Esophagus muscularis mucosa (tissue), 4 donors: ENCODE measurements at regions of chr2 and their contacts with region 1.

Region 1: GRCh38 chr2:181104512-181105115 is 124.2 kb downstream of the UBE2E3 start:
- DNase-seq: no peak
- H3K4me3 ChIP-seq: no peak overlapping the region
- H3K27ac ChIP-seq: no peak overlapping the region
- H3K4me1 ChIP-seq: peaks cover 0 to 5% (median 0%) of the 10 kb centered on the region in 4 donors
- H3K27me3 ChIP-seq: no peaks in the 10 kb centered on the region
- CTCF ChIP-seq: peak; percentile 36 to 62 (median 42)
- EP300 ChIP-seq: no peak
- POLR2A ChIP-seq: no peak

Region 2: DNA sequence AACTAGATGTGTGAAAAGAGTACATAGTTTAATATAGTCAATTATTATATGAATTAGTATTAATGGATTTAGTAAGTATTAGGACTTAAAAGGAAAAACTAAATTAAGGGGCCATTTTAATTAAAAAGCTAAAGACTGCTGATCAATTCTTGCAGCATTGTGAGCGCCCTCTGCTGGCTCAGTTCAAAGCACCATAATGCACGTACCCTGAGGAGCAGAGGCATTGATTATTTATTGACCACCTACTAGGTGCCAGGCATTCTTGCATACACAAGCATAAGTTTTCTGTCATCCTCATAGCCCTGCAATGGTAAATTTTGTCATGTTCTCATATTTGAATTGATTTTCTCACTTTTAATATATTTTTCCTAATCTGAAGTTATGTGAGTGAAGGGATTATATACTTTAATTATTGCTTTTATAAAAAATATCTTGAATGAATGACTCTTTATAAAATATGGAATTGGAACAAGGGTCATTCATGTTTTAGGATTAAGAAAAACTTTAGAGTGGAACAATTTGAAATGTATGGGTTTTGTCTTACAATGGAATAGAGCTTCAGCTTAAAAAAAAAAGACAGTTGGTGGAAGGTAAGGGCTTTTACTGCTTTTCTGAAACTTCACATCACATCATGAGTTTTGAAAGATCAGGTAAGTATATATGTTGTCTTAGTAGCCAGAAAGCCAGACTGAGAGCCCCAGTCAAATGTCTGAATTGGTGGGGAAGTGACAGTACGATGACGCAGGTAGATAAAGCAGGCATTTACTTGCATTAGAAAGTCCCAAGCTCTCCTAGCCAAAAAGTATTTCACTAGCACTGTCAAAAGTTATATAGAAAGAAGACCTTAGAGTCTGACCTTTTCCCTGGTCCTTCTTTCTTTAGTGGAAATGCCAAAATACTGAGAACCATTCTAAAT is 362.3 kb after region 1 on chr2:
- intact Hi-C with region 1: loop called (anchors 5 kb)
- DNase-seq: no peak
- H3K4me3 ChIP-seq: no peak overlapping the region
- H3K27ac ChIP-seq: no peak overlapping the region
- H3K4me1 ChIP-seq: no peaks in the 10 kb centered on the region
- H3K27me3 ChIP-seq: no peaks in the 10 kb centered on the region
- CTCF ChIP-seq: peak; percentile 53 to 77 (median 69)
- EP300 ChIP-seq: no peak
- POLR2A ChIP-seq: no peak

Region 3: DNA sequence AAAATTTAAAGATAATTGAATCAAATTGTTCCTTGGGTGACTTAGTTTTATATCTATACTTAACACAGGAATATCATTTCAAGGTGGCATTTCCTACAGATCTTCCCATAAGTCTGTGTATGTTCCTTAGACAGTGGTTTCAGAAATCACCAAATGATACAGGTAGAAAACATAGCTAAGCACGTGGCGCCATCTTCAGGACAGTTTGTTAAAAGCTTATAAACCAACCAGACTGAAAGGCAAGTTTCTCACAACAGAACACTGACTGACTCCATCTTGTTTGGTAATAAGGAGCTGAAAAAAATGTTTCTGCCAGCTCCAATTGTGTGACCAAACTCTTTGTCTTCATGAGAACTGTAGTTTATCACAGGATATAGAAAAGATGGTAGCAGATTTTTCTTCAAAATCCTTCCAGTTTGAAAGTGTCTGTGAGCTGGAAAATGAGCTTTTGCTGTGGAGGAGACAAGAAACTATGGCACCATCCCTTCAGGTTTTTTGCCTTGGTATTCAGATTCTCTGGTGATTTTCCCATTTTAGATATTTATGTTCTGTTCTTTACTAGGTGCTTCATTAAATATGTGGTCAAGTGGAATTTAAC is 610.5 kb after region 1 on chr2:
- intact Hi-C with region 1: loop called (anchors 10 kb)
- DNase-seq: no peak
- H3K4me3 ChIP-seq: no peak overlapping the region
- H3K27ac ChIP-seq: no peak overlapping the region
- H3K4me1 ChIP-seq: no peaks in the 10 kb centered on the region
- H3K27me3 ChIP-seq: no peaks in the 10 kb centered on the region
- CTCF ChIP-seq: peak; percentile 57 to 62 (median 60)
- EP300 ChIP-seq: no peak
- POLR2A ChIP-seq: no peak